ENCODE measurements at regions of chr1 and their contacts with region 1.

Region 1: GRCh38 chr1:222084996-222085395 is 343.1 kb upstream of the DUSP10 start:
- DNase-seq: no peak
- H3K4me3 ChIP-seq: no peak overlapping the region
- H3K27ac ChIP-seq: no peak overlapping the region
- H3K4me1 ChIP-seq: no peaks in the 10 kb centered on the region
- H3K27me3 ChIP-seq: no peaks in the 10 kb centered on the region
- CTCF ChIP-seq: no peak
- EP300 ChIP-seq: no peak
- POLR2A ChIP-seq: no peak

Region 2: GRCh38 chr1:221965252-221965651 is 119.7 kb before region 1 on chr1:
- intact Hi-C with region 1: no loop called
- DNase-seq: no peak
- H3K4me3 ChIP-seq: no peak overlapping the region
- H3K27ac ChIP-seq: no peak overlapping the region
- H3K4me1 ChIP-seq: peaks cover 2% of the 10 kb centered on the region
- H3K27me3 ChIP-seq: no peaks in the 10 kb centered on the region
- CTCF ChIP-seq: no peak
- EP300 ChIP-seq: no peak
- POLR2A ChIP-seq: no peak

Region 3: DNA sequence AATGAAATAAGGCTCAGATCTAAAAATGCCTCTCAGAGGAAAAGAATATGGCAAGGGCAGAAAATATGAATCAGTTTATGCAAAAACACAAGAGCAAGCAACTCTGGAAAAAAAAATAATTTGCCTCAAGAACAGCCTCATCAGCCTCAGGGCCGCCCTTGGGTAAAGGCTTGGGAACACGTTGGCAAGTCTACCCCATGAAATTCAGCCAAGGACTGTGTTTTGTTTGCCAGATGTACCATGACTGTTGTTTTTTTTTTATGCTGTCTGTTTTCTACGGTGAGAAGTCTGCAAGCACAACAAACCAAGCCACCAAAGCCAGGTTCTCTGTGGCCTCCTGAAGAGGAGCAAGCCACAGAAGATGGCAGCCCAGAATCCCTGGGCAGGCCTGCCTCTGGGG is 444.9 kb after region 1 on chr1:
- intact Hi-C with region 1: loop called in 1 of 4 experiments (anchors 5 kb)
- DNase-seq: no peak
- H3K4me3 ChIP-seq: no peak overlapping the region
- H3K27ac ChIP-seq: no peak overlapping the region
- H3K4me1 ChIP-seq: no peaks in the 10 kb centered on the region
- H3K27me3 ChIP-seq: no peaks in the 10 kb centered on the region
- CTCF ChIP-seq: no peak
- EP300 ChIP-seq: no peak
- POLR2A ChIP-seq: no peak